BJ (cell line): ENCODE measurements at regions of chr22 and their contacts with region 1.

Region 1: GRCh38 chr22:30606455-30607299 is at the start of gene TCN2:
- DNase-seq: no peak
- H3K4me3 ChIP-seq: peak within 1 kb of the TSS; percentile 39
- H3K27me3 ChIP-seq: no peaks in the 10 kb centered on the region
- CTCF ChIP-seq: no peak
- polyA plus RNA-seq, gene TCN2: 9.1 and 15.8 TPM in 2 replicates

Region 2: DNA sequence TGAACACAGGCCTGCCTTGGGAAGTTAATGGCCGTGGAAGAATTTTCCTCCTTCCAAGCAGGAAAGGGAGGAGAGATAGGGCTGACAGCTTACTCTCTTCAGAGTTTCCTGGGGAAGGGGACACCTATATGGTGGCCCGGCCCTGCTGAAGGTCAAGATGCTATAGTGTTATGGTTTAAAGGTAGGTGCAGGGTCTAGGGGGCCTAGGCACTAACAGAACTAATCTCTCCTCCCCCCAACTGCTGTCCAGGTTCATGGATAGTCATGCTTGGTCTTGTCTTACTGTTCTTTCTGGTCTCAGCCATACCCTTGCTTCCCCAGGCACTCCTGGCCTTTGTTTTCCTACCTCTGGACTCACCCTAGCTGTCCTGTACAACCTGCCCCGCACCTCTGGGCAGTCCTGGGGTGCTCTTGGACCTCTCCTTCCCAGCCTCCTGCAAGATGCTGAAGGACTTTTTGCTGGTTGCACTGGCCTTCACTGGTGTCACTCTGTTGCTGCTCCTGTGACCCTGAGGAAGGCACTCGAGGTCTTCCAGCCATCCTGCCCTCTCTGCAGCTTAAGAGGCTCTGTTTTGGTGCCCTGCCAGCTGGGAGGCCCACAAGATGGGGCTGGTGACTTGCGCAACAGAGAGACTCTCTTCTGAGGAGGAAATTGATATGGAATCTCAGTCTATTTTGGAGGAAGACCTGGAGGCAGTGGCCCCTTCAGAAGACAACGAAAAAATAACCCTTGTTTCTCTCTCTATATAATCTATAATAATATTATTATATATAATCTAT is 152.8 kb before region 1 on chr22:
- CTCF ChIA-PET with region 1: no interaction called
- POLR2A ChIA-PET with region 1: no interaction called
- DNase-seq: no peak
- H3K4me3 ChIP-seq: no peak overlapping the region
- H3K27me3 ChIP-seq: peaks cover 1% of the 10 kb centered on the region; the same call in 1 of the 2 replicates
- CTCF ChIP-seq: no peak

Region 3: GRCh38 chr22:30573594-30574094 is 33.0 kb before region 1 on chr22:
- CTCF ChIA-PET with region 1: no interaction called
- POLR2A ChIA-PET with region 1: no interaction called
- DNase-seq: no peak
- H3K4me3 ChIP-seq: no peak overlapping the region
- H3K27me3 ChIP-seq: peaks cover 10% of the 10 kb centered on the region
- CTCF ChIP-seq: no peak

Region 4: GRCh38 chr22:30591588-30592359 is 14.9 kb before region 1 on chr22 and contains the start of gene PES1:
- CTCF ChIA-PET with region 1: interaction called, 15 read pairs
- POLR2A ChIA-PET with region 1: no interaction called
- DNase-seq: peak; percentile 90
- H3K4me3 ChIP-seq: peak within 1 kb of the TSS; percentile 83
- H3K27me3 ChIP-seq: peaks cover 7% of the 10 kb centered on the region
- CTCF ChIP-seq: no peak
- polyA plus RNA-seq, gene PES1: 89.2 and 109 TPM in 2 replicates

Region 5: DNA sequence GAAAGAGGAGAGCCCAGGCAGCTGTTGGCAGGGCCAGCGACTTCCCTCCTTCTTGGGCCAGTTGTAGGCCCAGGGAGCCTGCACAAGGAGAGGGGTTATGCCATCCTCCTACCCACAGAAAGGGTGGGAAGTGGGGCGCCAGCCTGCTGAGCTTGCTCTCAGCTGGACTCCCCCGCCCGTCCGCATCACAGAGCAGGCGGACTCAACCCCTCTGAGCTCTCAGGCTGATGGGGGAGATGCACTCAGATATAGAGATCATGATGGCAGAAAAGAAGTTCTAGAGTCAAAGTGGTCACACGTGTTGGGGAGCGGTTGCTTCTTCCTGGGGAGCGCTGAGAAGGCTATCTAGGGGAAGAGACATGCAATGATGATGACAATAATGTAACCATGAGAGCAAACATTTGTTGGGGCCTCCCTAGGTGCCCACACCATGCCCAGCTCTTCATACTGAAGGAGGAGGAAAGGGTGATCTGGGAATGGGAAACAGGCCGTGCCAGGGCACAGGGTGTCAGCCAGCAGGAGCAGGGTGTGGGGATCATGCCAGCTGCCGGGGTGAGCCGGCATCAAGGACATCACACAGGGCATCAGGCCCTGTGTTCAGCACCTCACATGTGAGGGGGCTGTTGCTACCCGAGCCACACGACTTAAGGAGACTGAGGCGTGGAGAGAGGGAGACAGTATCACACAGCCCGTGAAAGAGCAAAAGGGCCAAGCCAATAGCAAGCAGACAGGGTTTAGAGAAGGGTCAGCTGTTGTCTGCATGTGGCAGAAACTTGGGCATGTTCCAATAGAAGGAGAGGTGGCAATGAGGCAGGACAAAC is 36.6 kb after region 1 on chr22:
- CTCF ChIA-PET with region 1: no interaction called
- POLR2A ChIA-PET with region 1: no interaction called
- DNase-seq: no peak
- H3K4me3 ChIP-seq: no peak overlapping the region
- H3K27me3 ChIP-seq: no peaks in the 10 kb centered on the region
- CTCF ChIP-seq: no peak